Activated CD4-positive, alpha-beta T cell treated with anti-CD3 and anti-CD28 coated beads, Interleukin-2, amount 10 ng/mL, durations not matched to agents 24 days and 14 days (primary cell): ENCODE measurements at regions of chr12 and their contacts with region 1.

Region 1: GRCh38 chr12:120445911-120446843 is at the starts of genes GATC and TRIAP1:
- DNase-seq: peak; percentile 97
- H3K4me3 Mint-ChIP-seq: peak within 1 kb of the TSS; percentile 99
- H3K27ac Mint-ChIP-seq: peak within 1 kb of the TSS; percentile 100
- H3K4me1 Mint-ChIP-seq: peaks cover 29% of the 10 kb centered on the region
- H3K27me3 Mint-ChIP-seq: peaks cover 2% of the 10 kb centered on the region
- total RNA-seq, gene GATC: 34.1 and 41.0 TPM in 2 replicates
- total RNA-seq, gene TRIAP1: 54.6 and 57.5 TPM in 2 replicates

Region 2: GRCh38 chr12:120019938-120020337 is 426.2 kb before region 1 on chr12:
- intact Hi-C with region 1: no loop called
- DNase-seq: no peak
- H3K4me3 Mint-ChIP-seq: no peak overlapping the region
- H3K27ac Mint-ChIP-seq: peak overlapping the region; percentile 11
- H3K4me1 Mint-ChIP-seq: peaks cover 35% of the 10 kb centered on the region
- H3K27me3 Mint-ChIP-seq: no peaks in the 10 kb centered on the region

Region 3: DNA sequence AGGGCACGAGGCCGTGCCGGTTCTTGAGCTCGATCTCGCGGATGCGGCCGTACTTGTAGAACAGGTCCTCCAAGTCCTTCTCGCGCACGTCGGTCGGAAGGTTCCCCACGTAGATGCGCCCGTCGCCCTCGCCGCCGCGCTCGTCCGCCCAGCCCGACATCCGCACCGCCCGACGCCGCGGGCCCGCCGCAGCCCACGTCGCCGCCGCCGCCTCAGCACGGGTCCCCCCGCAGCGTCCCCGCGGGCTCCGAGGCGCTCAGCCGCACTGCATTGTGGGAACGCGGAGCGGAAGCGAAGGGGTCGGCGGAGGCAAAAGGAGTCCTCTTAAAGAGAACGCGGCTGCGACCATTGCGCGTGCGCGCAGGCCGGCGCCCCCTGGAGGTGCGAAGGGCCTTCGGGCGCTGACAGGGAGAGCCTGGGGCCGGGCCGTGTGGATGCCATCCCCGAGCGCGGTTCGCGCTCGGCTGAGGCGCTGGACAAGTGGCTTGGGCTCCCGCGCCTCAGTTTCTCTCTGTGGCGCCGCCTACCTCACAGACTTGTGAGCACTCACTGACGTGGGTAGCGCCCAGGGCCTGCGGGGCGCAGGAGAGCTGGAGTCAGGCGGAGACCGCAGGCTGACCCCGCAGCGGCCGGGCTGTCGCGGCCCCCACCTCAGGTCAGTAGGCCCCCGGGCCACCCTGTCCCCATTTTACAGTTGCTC is 23.4 kb after region 1 on chr12 and contains the start of gene SRSF9:
- intact Hi-C with region 1: loop called (anchors 2 kb)
- DNase-seq: peak; percentile 100
- H3K4me3 Mint-ChIP-seq: peak within 1 kb of the TSS; percentile 90
- H3K27ac Mint-ChIP-seq: peak within 1 kb of the TSS; percentile 88
- H3K4me1 Mint-ChIP-seq: peaks cover 34% of the 10 kb centered on the region
- H3K27me3 Mint-ChIP-seq: peaks cover under 1% of the 10 kb centered on the region
- total RNA-seq, gene SRSF9: 249 and 255 TPM in 2 replicates

Region 4: GRCh38 chr12:120495723-120496412 is 49.7 kb after region 1 on chr12 and contains the start of gene DYNLL1:
- intact Hi-C with region 1: loop called (anchors 2 kb)
- DNase-seq: peak; percentile 100
- H3K4me3 Mint-ChIP-seq: peak within 1 kb of the TSS; percentile 94
- H3K27ac Mint-ChIP-seq: peak within 1 kb of the TSS; percentile 82
- H3K4me1 Mint-ChIP-seq: peaks cover 31% of the 10 kb centered on the region
- H3K27me3 Mint-ChIP-seq: no peaks in the 10 kb centered on the region
- total RNA-seq, gene DYNLL1: 330 and 351 TPM in 2 replicates

Region 5: GRCh38 chr12:120514002-120514401 is 67.8 kb after region 1 on chr12:
- intact Hi-C with region 1: no loop called
- DNase-seq: no peak
- H3K4me3 Mint-ChIP-seq: no peak overlapping the region
- H3K27ac Mint-ChIP-seq: no peak overlapping the region
- H3K4me1 Mint-ChIP-seq: no peaks in the 10 kb centered on the region
- H3K27me3 Mint-ChIP-seq: no peaks in the 10 kb centered on the region

Region 6: GRCh38 chr12:120534203-120534702 is 88.1 kb after region 1 on chr12 and contains the start of gene RNF10:
- intact Hi-C with region 1: loop called (anchors 2 kb)
- DNase-seq: peak; percentile 94
- H3K4me3 Mint-ChIP-seq: peak within 1 kb of the TSS; percentile 96
- H3K27ac Mint-ChIP-seq: peak within 1 kb of the TSS; percentile 96
- H3K4me1 Mint-ChIP-seq: peaks cover 45% of the 10 kb centered on the region
- H3K27me3 Mint-ChIP-seq: no peaks in the 10 kb centered on the region
- total RNA-seq, gene RNF10: 153 and 160 TPM in 2 replicates